ENCODE measurements at regions of chr16 and their contacts with region 1.

Region 1: DNA sequence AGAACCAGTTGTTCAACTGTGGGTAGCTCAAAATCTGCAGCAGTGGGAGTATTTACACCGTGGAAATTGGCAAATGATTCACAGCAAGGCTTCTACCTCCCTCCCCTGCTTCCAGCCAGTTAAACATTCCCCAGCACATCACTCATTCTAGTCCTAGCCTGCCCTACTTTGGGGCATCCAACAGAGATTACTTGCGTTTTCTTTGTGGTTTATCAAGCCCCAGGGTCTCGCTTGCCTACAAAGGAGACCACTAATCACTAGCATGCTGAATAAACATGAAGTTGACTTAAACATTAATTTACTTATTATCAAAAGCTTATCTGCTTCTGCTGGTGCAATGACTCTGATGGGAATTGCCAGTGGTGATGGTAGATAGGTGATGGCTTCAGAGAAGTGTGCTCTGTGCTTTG is 94.5 kb downstream of the MARF1 start:
- DNase-seq: no peak
- H3K4me3 ChIP-seq: no peak overlapping the region
- H3K27ac ChIP-seq: no peak overlapping the region
- H3K27me3 ChIP-seq: no peaks in the 10 kb centered on the region
- CTCF ChIP-seq: no peak

Region 2: GRCh38 chr16:15427648-15428239 is 120.7 kb before region 1 on chr16:
- CTCF ChIA-PET with region 1: interaction called, 11 read pairs
- POLR2A ChIA-PET with region 1: no interaction called
- DNase-seq: no peak
- H3K4me3 ChIP-seq: peak overlapping the region; percentile 27
- H3K27ac ChIP-seq: no peak overlapping the region
- H3K27me3 ChIP-seq: peaks cover 6% of the 10 kb centered on the region
- CTCF ChIP-seq: peak; percentile 69

Region 3: GRCh38 chr16:15529673-15530072 is 18.8 kb before region 1 on chr16:
- CTCF ChIA-PET with region 1: interaction called, 10 read pairs
- POLR2A ChIA-PET with region 1: no interaction called
- DNase-seq: no peak
- H3K4me3 ChIP-seq: no peak overlapping the region
- H3K27ac ChIP-seq: no peak overlapping the region
- H3K27me3 ChIP-seq: no peaks in the 10 kb centered on the region
- CTCF ChIP-seq: no peak

Region 4: GRCh38 chr16:15559176-15559575 is 10.7 kb after region 1 on chr16:
- CTCF ChIA-PET with region 1: interaction called, 11 read pairs
- POLR2A ChIA-PET with region 1: no interaction called
- DNase-seq: no peak
- H3K4me3 ChIP-seq: no peak overlapping the region
- H3K27ac ChIP-seq: no peak overlapping the region
- H3K27me3 ChIP-seq: no peaks in the 10 kb centered on the region
- CTCF ChIP-seq: no peak

Region 5: GRCh38 chr16:15564604-15565339 is 16.3 kb after region 1 on chr16:
- CTCF ChIA-PET with region 1: interaction called, 11 read pairs
- POLR2A ChIA-PET with region 1: no interaction called
- DNase-seq: no peak
- H3K4me3 ChIP-seq: no peak overlapping the region
- H3K27ac ChIP-seq: no peak overlapping the region
- H3K27me3 ChIP-seq: no peaks in the 10 kb centered on the region
- CTCF ChIP-seq: no peak